GM13976 (cell line): ENCODE measurements at regions of chr6 and their contacts with region 1.

Region 1: DNA sequence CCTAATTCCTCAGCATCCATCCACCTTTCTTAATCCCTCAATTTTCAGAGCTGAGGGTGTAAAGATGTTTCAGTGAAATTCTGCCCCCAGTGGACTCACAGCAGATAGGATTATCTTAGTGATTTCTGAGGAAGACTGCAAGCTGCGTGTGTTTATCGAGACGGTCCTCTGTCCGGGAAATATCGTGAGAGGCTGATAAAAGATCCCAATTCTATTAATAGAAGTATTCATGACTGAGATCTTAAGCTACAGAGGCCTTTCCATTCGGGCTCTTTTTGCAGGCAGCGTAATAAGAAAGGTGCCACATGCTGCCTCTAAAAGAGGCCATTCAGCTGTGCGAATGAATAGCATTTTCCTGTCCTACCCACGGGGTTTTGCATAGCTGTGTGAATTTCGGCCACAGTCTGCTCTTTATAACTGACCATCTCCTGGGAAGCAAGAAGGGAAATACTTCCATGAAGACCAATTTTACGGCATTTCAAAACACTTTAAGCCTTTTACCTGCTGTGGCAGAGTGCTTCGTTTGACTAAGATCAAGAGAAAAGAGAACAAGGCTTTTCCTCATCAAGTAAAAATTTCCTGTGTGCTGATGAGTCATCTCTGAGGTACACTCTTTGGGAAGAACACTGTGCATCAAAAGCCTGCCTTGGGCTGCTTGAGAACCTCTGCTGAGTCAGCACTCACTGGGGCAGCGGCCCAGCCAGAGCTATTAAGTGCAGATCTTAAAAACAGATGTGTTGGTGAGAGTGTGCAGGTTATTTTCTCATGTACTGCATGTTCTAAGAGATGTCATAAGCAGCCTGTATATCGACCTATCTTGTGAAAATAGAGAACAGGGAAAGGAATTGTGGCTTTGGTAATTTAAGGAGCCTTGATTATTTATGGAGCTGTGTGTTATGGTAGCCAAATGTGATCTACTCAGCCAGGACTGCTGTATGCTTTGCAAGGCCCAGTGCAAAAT is 208.7 kb downstream of the ARHGAP18 start:
- DNase-seq: no peak
- CTCF ChIP-seq: peak; percentile 28

Region 2: GRCh38 chr6:129748212-129748900 is 247.1 kb after region 1 on chr6:
- in situ Hi-C with region 1: loop called (anchors 10 kb)
- DNase-seq: peak; percentile 49
- CTCF ChIP-seq: no peak